MCF 10A (cell line): ENCODE measurements at regions of chr3 and their contacts with region 1.

Region 1: GRCh38 chr3:185764163-185764979 is 60.5 kb downstream of the IGF2BP2 start:
- DNase-seq: no peak
- H3K4me3 Mint-ChIP-seq: no peak overlapping the region
- H3K27ac Mint-ChIP-seq: peak overlapping the region; percentile 35
- H3K4me1 Mint-ChIP-seq: peaks cover 44% of the 10 kb centered on the region
- H3K27me3 Mint-ChIP-seq: no peaks in the 10 kb centered on the region
- CTCF ChIP-seq: no peak

Region 2: GRCh38 chr3:185724251-185724650 is 40.1 kb before region 1 on chr3:
- CTCF ChIA-PET with region 1: no interaction called
- POLR2A ChIA-PET with region 1: no interaction called
- intact Hi-C with region 1: no loop called
- DNase-seq: no peak
- H3K4me3 Mint-ChIP-seq: no peak overlapping the region
- H3K27ac Mint-ChIP-seq: no peak overlapping the region
- H3K4me1 Mint-ChIP-seq: peaks cover 59% of the 10 kb centered on the region
- H3K27me3 Mint-ChIP-seq: no peaks in the 10 kb centered on the region
- CTCF ChIP-seq: no peak

Region 3: DNA sequence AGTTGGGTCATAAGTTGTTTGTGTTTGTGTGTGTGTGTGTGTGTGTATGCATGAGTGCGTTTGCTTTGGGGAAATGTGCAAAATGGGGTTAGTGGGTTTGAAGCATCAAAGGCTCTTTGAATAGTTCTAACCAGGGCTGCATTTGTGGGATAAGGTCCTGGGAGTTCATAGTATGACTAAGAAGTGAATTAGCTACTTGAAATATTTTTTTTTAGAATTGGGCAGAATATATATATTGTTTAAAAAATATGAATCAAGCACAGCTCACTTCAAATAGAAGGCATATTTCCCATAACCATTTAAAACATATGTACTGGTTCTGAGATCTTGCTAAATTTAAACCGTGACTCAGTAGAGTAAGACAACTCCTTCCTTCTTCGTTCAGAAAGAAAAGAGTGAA is 17.4 kb after region 1 on chr3:
- CTCF ChIA-PET with region 1: interaction called, 55 read pairs
- POLR2A ChIA-PET with region 1: interaction called, 3 read pairs
- intact Hi-C with region 1: no loop called
- DNase-seq: peak; percentile 24
- H3K4me3 Mint-ChIP-seq: no peak overlapping the region
- H3K27ac Mint-ChIP-seq: peak overlapping the region; percentile 19
- H3K4me1 Mint-ChIP-seq: peaks cover 53% of the 10 kb centered on the region
- H3K27me3 Mint-ChIP-seq: no peaks in the 10 kb centered on the region
- CTCF ChIP-seq: no peak

Region 4: GRCh38 chr3:185789891-185790830 is 25.8 kb after region 1 on chr3:
- CTCF ChIA-PET with region 1: interaction called, 18 read pairs
- POLR2A ChIA-PET with region 1: interaction called, 6 read pairs
- intact Hi-C with region 1: no loop called
- DNase-seq: no peak
- H3K4me3 Mint-ChIP-seq: no peak overlapping the region
- H3K27ac Mint-ChIP-seq: no peak overlapping the region
- H3K4me1 Mint-ChIP-seq: peaks cover 50% of the 10 kb centered on the region
- H3K27me3 Mint-ChIP-seq: no peaks in the 10 kb centered on the region
- CTCF ChIP-seq: no peak